ENCODE measurements at regions of chr19 and their contacts with region 1.

Region 1: GRCh38 chr19:32405431-32406161 is at the start of gene DPY19L3:
- DNase-seq: peak; percentile 96 to 99 (median 98)
- ATAC-seq: peak; percentile 96
- H3K4me3 ChIP-seq: peak within 1 kb of the TSS; percentile 74
- H3K27ac ChIP-seq: peak within 1 kb of the TSS; percentile 96
- H3K4me1 ChIP-seq: peaks cover 18 to 21% of the 10 kb centered on the region in 2 experiments
- H3K27me3 ChIP-seq: no peaks in the 10 kb centered on the region
- CTCF ChIP-seq: no peak
- EP300 ChIP-seq: 0 out of 2 replicates have a peak, but pooled peaks have one; percentile 13
- POLR2A ChIP-seq: peak; percentile 93
- RAD21 ChIP-seq: no peak
- polyA plus RNA-seq, gene DPY19L3: 4.7 to 6.0 TPM

Region 2: DNA sequence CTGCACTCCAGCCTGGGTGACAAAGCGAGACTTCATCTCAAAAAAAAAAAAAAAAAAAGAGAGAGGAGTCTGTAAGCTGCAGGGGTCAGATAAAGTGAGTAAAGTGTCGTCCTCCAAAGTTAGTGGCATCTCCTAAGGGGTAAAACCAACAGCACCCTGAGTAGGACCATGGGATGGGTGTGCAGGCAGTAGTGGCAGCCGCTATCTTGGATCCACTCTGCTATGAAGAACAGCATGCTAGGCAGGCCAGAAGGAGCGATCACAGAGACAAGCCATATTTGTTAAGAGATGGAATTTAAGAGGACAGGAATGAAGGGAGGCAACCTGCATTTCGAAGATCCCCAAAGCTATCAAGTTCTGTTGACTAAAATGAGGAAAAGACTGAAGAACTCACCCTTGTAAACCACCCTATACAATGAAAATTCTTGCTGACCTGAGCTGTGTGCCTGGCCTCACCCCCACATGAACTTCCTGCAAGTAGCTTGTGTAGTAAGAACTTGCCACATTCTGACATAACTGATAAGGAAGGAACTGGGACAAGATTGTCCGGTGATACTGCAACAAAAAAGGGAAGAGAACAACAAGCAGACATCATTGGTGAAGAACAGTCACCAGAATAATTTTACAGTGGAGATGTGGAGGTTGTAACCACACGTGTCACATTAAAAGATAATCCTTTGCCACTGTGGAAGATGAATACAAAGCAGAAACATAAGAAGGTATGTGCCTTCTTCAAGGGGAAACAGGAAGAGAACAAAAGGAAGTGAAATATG is 16.2 kb after region 1 on chr19:
- CTCF ChIA-PET with region 1: no interaction called
- POLR2A ChIA-PET with region 1: interaction called, 18 read pairs
- in situ Hi-C with region 1: no loop called
- intact Hi-C with region 1: loop called (anchors 2 kb)
- DNase-seq: peak; percentile 28 to 82 (median 53)
- ATAC-seq: peak; percentile 89
- H3K4me3 ChIP-seq: no peak overlapping the region
- H3K27ac ChIP-seq: peak overlapping the region; percentile 85
- H3K4me1 ChIP-seq: peaks cover 26 to 31% of the 10 kb centered on the region in 2 experiments
- H3K27me3 ChIP-seq: no peaks in the 10 kb centered on the region
- CTCF ChIP-seq: no peak
- EP300 ChIP-seq: peak; percentile 90
- POLR2A ChIP-seq: no peak
- RAD21 ChIP-seq: no peak

Region 3: DNA sequence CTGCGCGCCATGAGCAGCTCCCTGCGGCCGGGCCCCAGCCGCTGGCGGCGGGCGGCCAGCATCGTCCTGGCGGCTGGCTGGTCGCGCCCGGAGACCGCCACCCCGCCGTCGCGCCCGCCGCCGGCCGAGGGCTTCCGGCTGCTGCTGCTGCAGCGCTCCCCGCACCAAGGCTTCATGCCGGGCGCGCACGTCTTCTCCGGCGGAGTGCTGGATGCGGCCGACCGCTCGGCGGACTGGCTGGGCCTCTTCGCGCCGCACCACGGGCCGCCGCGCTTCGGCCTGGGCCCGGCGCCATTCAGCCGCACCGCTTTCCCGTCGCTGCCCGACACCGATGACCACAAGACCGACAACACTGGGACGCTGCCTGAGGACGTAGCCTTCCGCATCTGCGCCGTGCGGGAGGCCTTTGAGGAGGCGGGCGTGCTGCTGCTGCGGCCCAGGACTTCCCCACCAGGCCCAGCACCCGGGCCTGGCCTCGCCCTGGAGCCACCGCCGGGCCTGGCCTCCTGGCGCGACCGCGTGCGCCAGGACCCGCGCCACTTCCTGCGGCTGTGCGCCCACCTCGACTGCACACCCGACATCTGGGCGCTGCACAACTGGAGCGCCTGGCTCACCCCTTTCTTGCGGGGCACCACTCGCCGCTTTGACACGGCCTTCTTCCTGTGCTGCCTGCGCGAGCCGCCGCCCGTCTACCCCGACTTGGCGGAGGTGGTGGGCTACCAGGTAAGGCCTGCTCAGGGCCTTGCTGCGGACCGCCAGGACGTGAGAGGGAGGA is 286.5 kb after region 1 on chr19:
- CTCF ChIA-PET with region 1: no interaction called
- POLR2A ChIA-PET with region 1: no interaction called
- in situ Hi-C with region 1: no loop called
- intact Hi-C with region 1: no loop called
- DNase-seq: peak; percentile 58 to 76 (median 62)
- ATAC-seq: peak; percentile 73
- H3K4me3 ChIP-seq: peak overlapping the region; percentile 73
- H3K27ac ChIP-seq: peak overlapping the region; percentile 86
- H3K4me1 ChIP-seq: peaks cover 19 to 34% of the 10 kb centered on the region in 2 experiments; a peak in 4 of 5 replicates
- H3K27me3 ChIP-seq: no peaks in the 10 kb centered on the region
- CTCF ChIP-seq: no peak
- EP300 ChIP-seq: no peak
- POLR2A ChIP-seq: no peak
- RAD21 ChIP-seq: no peak